OCI-LY7 (cell line): ENCODE measurements at regions of chr3 and their contacts with region 1.

Region 1: GRCh38 chr3:33636125-33636850 is 81.8 kb downstream of the CLASP2 start:
- DNase-seq: peak; percentile 72
- H3K4me3 ChIP-seq: no peak overlapping the region
- H3K27ac ChIP-seq: no peak overlapping the region
- H3K4me1 ChIP-seq: no peaks in the 10 kb centered on the region
- CTCF ChIP-seq: peak; percentile 90

Region 2: GRCh38 chr3:33401781-33402180 is 234.5 kb before region 1 on chr3:
- CTCF ChIA-PET with region 1: no interaction called
- POLR2A ChIA-PET with region 1: no interaction called
- intact Hi-C with region 1: no loop called
- DNase-seq: no peak
- H3K4me3 ChIP-seq: no peak overlapping the region
- H3K27ac ChIP-seq: no peak overlapping the region
- H3K4me1 ChIP-seq: no peaks in the 10 kb centered on the region
- CTCF ChIP-seq: no peak

Region 3: GRCh38 chr3:33717866-33718594 is 81.7 kb after region 1 on chr3 and contains the start of gene CLASP2:
- CTCF ChIA-PET with region 1: no interaction called
- POLR2A ChIA-PET with region 1: no interaction called
- intact Hi-C with region 1: loop called (anchors 1 kb)
- DNase-seq: peak; percentile 92
- H3K4me3 ChIP-seq: peak within 1 kb of the TSS; percentile 94
- H3K27ac ChIP-seq: peak within 1 kb of the TSS; percentile 69
- H3K4me1 ChIP-seq: peaks cover 27% of the 10 kb centered on the region
- CTCF ChIP-seq: no peak
- total RNA-seq, gene CLASP2: 99.1 and 108 TPM in 2 replicates

Region 4: DNA sequence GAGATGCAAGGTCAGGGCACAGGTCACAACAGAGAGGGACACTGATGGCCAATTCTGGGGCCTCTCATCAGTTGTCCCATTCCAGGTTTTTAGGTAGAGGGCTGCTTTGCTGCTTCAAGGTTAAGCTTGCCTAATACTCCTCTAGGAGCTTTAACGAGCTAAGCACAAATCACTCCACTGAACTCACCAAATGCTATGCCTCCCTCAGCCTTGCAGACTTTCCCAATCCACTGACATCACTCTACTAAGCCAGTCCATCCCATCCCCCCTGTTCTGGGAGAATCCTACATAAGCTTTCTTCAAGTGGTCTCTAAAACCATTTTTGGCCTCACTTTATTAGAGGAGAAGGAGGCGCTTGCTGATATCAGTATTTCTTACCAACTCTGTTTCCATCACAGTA is 137.3 kb after region 1 on chr3:
- CTCF ChIA-PET with region 1: no interaction called
- POLR2A ChIA-PET with region 1: interaction called, 8 read pairs
- intact Hi-C with region 1: loop called (anchors 1 kb)
- DNase-seq: no peak
- H3K4me3 ChIP-seq: no peak overlapping the region
- H3K27ac ChIP-seq: no peak overlapping the region
- H3K4me1 ChIP-seq: no peaks in the 10 kb centered on the region
- CTCF ChIP-seq: no peak